Aorta (tissue), 5 donors: ENCODE measurements at regions of chr18 and their contacts with region 1.

Region 1: GRCh38 chr18:5879479-5879882 is 15.8 kb downstream of the TMEM200C start:
- DNase-seq: no peak
- ATAC-seq: no peak
- H3K4me3 ChIP-seq: no peak overlapping the region
- H3K27ac ChIP-seq: no peak overlapping the region
- H3K4me1 ChIP-seq: no peaks in the 10 kb centered on the region
- H3K27me3 ChIP-seq: no peaks in the 10 kb centered on the region

Region 2: DNA sequence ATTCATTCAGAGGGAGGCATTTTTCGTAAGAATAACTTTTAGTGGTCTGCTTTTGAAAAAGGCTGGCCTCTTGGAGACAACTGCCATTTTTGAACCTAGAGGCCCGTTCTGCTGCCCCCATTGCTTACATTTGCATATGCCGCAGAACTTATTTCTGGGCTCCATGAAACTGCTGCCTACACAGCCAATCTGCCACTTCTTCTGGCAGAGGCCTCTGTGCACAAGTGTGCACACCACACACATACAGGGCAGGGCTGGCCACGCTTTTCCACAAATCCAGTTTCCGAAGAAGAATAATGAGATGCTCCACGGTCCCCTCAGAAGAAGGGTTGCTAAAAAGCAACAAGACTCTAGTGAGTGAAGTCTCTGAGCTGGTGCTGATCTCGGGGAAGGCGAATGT is 40.4 kb before region 1 on chr18:
- intact Hi-C with region 1: no loop called
- DNase-seq: no peak
- ATAC-seq: no peak
- H3K4me3 ChIP-seq: no peak overlapping the region
- H3K27ac ChIP-seq: no peak overlapping the region
- H3K4me1 ChIP-seq: no peaks in the 10 kb centered on the region
- H3K27me3 ChIP-seq: no peaks in the 10 kb centered on the region

Region 3: GRCh38 chr18:6132751-6133368 is 253.4 kb after region 1 on chr18:
- intact Hi-C with region 1: no loop called
- DNase-seq: no peak
- ATAC-seq: no peak
- H3K4me3 ChIP-seq: no peak overlapping the region
- H3K27ac ChIP-seq: no peak overlapping the region
- H3K4me1 ChIP-seq: no peaks in the 10 kb centered on the region
- H3K27me3 ChIP-seq: no peaks in the 10 kb centered on the region

Region 4: DNA sequence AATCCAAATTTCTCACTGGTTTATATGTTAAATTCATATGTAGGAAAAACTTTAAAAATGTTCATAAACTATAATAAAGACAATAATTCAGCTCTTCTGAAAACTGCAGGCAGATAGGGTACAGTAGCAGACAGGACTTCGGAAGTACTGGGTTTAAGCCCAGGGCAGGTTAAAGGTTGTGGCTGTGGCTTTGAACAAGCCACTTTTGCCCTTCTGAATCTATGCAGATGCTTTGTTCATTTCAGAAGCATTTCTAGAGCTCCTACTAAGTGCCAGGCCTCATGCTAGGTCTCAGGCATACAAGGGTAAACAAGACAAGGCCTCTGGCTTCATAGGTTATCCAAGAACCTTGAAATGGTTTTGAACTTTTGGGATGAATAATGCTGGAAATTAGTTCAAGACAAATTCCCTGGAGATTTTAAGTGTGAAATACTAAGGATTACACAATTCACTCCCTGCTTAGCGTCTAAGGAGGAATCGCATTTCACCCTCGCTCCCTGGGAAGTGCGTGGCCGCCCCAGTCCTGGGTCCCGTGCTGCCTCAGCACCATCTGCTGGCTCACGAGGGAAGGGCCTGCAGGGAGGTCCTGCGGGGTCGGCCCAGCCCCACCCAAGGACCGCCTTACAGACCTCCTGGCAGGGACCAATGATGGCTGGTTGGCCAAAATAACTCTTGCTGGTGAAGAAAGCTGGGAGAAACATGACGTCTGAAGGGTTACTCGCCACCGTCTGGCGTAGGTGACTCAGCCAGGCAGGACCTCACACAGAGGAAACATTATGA is 602.9 kb after region 1 on chr18:
- intact Hi-C with region 1: loop called in 1 of 2 experiments (anchors 10 kb)
- DNase-seq: peak; percentile 59 to 82
- ATAC-seq: peak; percentile 93
- H3K4me3 ChIP-seq: no peak overlapping the region
- H3K27ac ChIP-seq: no peak overlapping the region
- H3K4me1 ChIP-seq: no peaks in the 10 kb centered on the region
- H3K27me3 ChIP-seq: no peaks in the 10 kb centered on the region

Region 5: GRCh38 chr18:6885992-6886796 is 1006.7 kb after region 1 on chr18:
- intact Hi-C with region 1: loop called in 1 of 2 experiments (anchors 5 kb)
- DNase-seq: no peak
- ATAC-seq: peak; percentile 77
- H3K4me3 ChIP-seq: no peak overlapping the region
- H3K27ac ChIP-seq: no peak overlapping the region
- H3K4me1 ChIP-seq: no peaks in the 10 kb centered on the region
- H3K27me3 ChIP-seq: no peaks in the 10 kb centered on the region